Dorsolateral prefrontal cortex (tissue), 120 donors: ENCODE measurements at regions of chr18 and their contacts with region 1.

Region 1: GRCh38 chr18:36572135-36572856 is 256.5 kb downstream of the TPGS2 start:
- DNase-seq: peak in 5 of 10 donors; percentile 11 to 82 (median 58)
- H3K4me3 ChIP-seq: peak overlapping the region in 4 of 59 donors; percentile 9 to 27 (median 18)
- H3K27ac ChIP-seq: no peak overlapping the region
- H3K27me3 ChIP-seq: no peaks in the 10 kb centered on the region
- CTCF ChIP-seq: peak; percentile 11 to 80 (median 59)

Region 2: GRCh38 chr18:36015629-36016028 is 556.7 kb before region 1 on chr18:
- intact Hi-C with region 1: loop called in 1 of 2 experiments (anchors 10 kb)
- DNase-seq: no peak
- H3K4me3 ChIP-seq: no peak overlapping the region
- H3K27ac ChIP-seq: no peak overlapping the region
- H3K27me3 ChIP-seq: no peaks in the 10 kb centered on the region
- CTCF ChIP-seq: no peak

Region 3: GRCh38 chr18:36095936-36096519 is 476.3 kb before region 1 on chr18:
- intact Hi-C with region 1: loop called in 1 of 2 experiments (anchors 10 kb)
- DNase-seq: no peak
- H3K4me3 ChIP-seq: no peak overlapping the region
- H3K27ac ChIP-seq: no peak overlapping the region
- H3K27me3 ChIP-seq: no peaks in the 10 kb centered on the region
- CTCF ChIP-seq: peak; percentile 47 to 87 (median 68)

Region 4: DNA sequence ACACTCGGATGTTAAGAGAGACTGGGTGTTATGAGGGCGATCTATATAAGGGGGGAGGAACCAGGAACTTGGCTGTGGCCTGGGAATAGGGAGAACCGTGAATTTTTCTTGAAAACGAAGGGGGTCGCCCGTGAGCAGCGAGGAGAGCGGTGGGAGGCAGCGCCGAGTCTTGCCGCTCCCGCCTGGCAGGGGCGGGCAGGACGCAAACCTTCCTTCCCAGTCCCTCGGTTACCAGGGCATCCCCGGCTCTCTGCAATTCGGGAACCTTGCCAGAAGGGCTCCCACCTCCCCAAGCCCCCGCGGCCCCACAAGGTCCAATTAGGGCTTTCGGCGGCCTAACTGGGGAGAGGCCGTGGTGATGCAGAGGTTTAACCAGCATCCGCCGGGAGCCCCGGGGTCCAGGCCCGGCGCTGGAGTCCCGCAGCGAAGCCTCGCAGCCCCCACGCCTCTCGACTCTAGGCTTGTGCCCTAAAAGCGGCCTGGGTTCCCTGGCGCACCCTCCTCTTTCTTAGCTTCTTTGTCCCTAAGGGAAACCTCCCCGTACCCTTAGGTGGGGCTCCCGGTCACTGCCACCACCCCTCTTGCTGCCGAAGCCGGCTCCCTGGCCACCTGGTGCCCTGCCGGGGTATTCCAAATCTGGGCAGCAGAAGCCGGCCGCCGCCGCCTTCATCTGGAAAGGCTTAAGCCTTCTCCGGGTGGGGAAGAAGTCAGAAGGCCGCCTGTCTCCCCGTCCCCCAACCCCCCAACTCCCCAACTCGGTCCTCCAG is 275.5 kb before region 1 on chr18:
- intact Hi-C with region 1: loop called (anchors 5 kb)
- DNase-seq: peak; percentile 48 to 86 (median 74)
- H3K4me3 ChIP-seq: peak overlapping the region; percentile 43 to 89 (median 76)
- H3K27ac ChIP-seq: peak overlapping the region in 52 of 59 donors; percentile 10 to 91 (median 70)
- H3K27me3 ChIP-seq: peaks cover 0 to 5% (median 0%) of the 10 kb centered on the region in 45 donors
- CTCF ChIP-seq: peak in 54 of 56 donors; percentile 33 to 71 (median 55)

Region 5: DNA sequence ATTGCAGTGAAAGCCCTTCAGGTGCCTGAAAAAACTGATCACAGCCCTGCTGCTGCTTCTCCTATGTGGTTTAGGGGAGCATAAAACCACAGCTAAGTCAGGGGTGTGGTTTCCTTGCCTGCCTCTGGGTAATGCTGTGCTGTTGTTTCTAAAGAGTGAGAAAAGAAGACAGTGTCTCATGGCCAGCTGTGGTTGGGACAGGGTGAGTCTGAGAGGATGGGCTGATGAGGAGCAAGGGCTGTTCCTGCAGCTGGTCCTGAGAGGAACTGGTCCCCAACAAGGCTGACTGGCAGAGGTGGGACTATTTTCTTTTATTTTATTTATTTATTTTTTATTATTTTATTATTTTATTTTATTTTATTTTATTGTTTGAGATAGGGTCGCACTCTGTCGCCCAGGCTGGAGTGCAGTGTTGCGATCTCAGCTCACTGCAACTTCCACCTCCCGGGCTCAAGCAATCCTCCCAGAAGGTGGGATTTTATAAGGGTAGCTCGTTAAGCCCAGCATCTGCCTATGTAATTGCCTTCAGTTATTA is 38.1 kb before region 1 on chr18:
- intact Hi-C with region 1: no loop called
- DNase-seq: no peak
- H3K4me3 ChIP-seq: no peak overlapping the region
- H3K27ac ChIP-seq: no peak overlapping the region
- H3K27me3 ChIP-seq: no peaks in the 10 kb centered on the region
- CTCF ChIP-seq: no peak